ENCODE measurements at regions of chrX and their contacts with region 1.

Region 1: DNA sequence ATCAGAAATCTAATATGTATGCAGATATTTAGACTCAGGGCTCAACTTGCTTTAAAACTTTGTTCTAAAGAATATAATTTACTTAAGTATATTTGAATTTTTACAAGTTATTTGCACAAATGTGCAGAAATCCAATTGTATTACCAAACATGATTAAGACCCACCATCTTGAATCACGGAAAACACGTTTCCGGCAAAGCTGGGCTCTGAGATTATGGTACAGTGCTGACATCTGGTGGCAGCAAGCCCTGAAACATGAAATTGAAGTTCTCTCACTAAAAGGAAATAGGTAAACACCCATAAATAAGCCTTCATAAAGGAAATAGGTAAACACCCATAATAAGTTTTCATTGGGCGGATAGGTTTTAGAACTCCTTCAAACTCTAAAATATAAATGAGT is 98.3 kb upstream of the MAOA start:
- H3K4me3 Mint-ChIP-seq: no peak overlapping the region
- H3K27ac Mint-ChIP-seq: no peak overlapping the region
- H3K4me1 Mint-ChIP-seq: peaks cover 12% of the 10 kb centered on the region
- H3K27me3 Mint-ChIP-seq: no peaks in the 10 kb centered on the region

Region 2: DNA sequence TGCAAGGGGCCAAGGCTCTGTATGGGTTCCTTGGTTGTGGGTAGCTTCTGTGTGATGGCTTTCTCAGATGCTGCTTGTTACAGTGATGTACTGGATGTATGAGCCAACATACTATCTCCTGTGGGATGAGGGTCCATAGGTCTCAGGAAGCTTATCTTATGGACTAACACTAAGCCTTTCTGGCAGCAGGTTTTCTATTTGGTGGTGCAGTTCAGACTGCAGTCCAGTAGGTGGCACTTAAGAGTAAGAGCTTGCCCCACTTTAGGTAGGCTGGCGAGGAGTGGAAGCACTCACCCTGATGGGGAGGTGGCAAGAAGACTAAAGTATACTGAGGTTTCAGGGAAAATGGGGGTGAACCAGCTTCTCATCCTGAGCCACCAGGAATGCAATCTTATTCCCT is 208.4 kb before region 1 on chrX:
- intact Hi-C with region 1: no loop called
- H3K4me3 Mint-ChIP-seq: no peak overlapping the region
- H3K27ac Mint-ChIP-seq: no peak overlapping the region
- H3K4me1 Mint-ChIP-seq: no peaks in the 10 kb centered on the region
- H3K27me3 Mint-ChIP-seq: no peaks in the 10 kb centered on the region

Region 3: DNA sequence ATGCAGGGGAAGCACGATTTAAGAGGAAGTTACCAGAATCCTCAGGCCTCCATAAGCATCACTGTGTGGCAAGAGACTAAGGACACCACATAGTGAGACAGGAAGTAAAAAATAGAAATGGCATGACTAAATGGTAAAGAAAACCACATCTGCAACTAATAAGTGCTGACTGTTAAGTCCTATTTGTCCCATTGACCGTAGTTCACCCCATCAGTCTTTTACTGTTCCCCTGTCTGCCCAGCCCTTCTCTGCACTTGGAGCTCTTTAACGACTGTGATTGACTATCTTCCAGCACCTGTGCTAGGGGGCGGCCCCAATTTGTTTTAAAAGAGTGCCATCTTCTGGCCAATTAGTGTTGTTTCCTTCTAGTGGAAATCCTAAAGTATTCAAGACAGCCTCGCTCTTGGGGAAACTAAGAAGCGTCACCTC is 192.5 kb after region 1 on chrX:
- intact Hi-C with region 1: loop called (anchors 2 kb)
- H3K4me3 Mint-ChIP-seq: no peak overlapping the region
- H3K27ac Mint-ChIP-seq: peak overlapping the region; percentile 69
- H3K4me1 Mint-ChIP-seq: peaks cover 16% of the 10 kb centered on the region
- H3K27me3 Mint-ChIP-seq: no peaks in the 10 kb centered on the region

Region 4: DNA sequence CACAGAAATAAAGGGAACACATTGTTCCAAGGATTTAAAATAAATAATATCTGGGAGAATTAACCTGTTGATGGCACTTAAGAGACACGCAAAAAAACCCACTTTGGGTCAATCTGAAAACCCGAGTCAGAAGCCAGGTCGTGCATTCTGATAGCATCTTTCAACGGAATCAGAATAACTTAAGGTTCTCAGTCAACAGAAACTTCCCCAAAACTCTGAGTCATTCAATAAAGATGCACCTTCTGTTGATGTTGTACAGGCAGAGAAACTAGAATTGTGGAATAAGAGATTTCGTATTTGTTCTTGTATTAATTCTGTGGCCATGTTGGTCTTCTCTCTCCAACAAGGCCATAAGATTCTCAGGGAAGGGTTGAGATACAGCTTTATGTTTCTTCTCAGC is 246.2 kb after region 1 on chrX:
- intact Hi-C with region 1: no loop called
- H3K4me3 Mint-ChIP-seq: no peak overlapping the region
- H3K27ac Mint-ChIP-seq: no peak overlapping the region
- H3K4me1 Mint-ChIP-seq: no peaks in the 10 kb centered on the region
- H3K27me3 Mint-ChIP-seq: no peaks in the 10 kb centered on the region

Measured in dendritic cell treated with granulocyte-macrophage colony-stimulating factor and Interleukin-4, amounts not matched to agents 40 ng/mL and 50 ng/mL, for 4 days (primary cell).